Calu3 (cell line): ENCODE measurements at regions of chr2 and their contacts with region 1.

Region 1: DNA sequence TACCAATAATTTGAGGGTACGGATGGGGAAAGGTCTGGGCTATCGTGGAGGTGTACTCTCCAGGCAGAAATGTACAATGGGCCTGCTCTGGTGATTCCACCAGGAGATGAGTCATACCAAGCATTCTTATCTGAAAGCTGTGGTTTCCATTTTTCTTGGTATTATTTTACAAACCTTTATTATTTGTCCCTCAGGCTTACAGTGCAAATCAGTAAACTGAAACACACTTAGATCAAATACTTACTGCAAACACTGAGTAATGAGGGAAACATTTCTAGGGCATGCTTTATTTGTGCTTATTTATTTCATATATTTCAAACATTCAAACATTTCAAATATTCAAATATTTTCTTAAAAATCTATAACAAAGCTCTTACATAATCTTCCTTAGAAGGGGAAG is 319.8 kb downstream of the RND3 start:
- DNase-seq: peak; percentile 40
- H3K4me3 Mint-ChIP-seq: no peak overlapping the region
- H3K27ac Mint-ChIP-seq: peak overlapping the region; percentile 99
- H3K4me1 Mint-ChIP-seq: peaks cover 70% of the 10 kb centered on the region
- H3K27me3 Mint-ChIP-seq: no peaks in the 10 kb centered on the region
- CTCF ChIP-seq: no peak

Region 2: DNA sequence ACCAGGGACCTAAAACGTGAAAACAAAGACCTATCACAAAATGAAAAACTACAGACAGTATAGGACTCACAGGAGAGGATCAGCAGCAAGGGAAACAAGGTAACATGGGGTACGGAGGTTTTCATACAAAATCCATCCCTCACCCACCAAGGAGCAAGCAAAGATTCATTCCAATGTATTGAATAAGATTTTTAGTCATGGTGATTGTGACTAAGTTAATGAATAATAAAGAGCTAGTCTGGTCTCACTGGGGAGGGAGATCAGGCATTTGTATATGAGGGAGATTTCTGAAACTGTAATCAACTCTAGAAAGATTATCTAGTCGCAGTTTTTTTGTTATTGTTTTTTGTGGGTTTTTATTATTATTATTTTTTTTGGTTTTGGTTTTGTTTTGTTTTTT is 243.7 kb before region 1 on chr2:
- CTCF ChIA-PET with region 1: no interaction called
- intact Hi-C with region 1: loop called (anchors 10 kb)
- DNase-seq: no peak
- H3K4me3 Mint-ChIP-seq: peak overlapping the region; percentile 10
- H3K27ac Mint-ChIP-seq: peak overlapping the region; percentile 63
- H3K4me1 Mint-ChIP-seq: peaks cover 18% of the 10 kb centered on the region
- H3K27me3 Mint-ChIP-seq: no peaks in the 10 kb centered on the region
- CTCF ChIP-seq: no peak

Region 3: DNA sequence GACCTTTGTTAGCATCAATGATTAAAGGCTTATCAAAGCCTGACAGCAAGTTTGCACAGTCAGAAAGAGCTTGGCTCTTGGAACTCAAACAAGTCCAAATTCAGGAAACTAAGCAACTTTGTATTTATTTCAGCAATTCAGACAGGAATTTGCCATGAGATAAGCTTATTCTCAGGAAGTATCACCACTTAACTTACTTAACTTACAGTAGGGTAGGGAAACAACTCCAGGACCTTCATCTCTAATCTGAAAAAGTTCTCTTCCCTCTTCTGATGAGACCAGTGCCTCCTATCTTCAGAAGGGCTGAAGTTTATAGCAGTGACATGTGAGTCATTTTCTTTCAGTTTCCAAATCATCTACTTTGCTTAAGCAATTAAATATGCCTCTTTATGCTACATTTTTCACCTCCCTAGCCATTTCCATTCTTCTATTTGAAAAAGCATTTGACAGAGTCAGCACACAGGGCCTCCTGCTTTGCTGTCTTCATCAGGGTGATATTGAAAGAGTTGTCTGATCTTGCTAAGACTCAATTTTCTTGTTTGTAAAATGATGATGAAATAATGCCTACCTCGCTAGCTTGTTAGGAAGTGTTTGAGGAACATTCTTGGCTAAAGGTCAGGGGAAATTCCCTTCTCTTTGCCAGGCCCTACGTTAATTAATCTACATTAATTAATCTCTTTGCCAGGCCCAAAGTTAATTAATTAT is 69.7 kb before region 1 on chr2:
- CTCF ChIA-PET with region 1: no interaction called
- intact Hi-C with region 1: no loop called
- DNase-seq: no peak
- H3K4me3 Mint-ChIP-seq: no peak overlapping the region
- H3K27ac Mint-ChIP-seq: peak overlapping the region; percentile 70
- H3K4me1 Mint-ChIP-seq: peaks cover 9% of the 10 kb centered on the region
- H3K27me3 Mint-ChIP-seq: no peaks in the 10 kb centered on the region
- CTCF ChIP-seq: no peak

Region 4: GRCh38 chr2:150143087-150143536 is 24.6 kb before region 1 on chr2:
- CTCF ChIA-PET with region 1: interaction called, 5 read pairs
- intact Hi-C with region 1: loop called (anchors 2 kb)
- DNase-seq: peak; percentile 30
- H3K4me3 Mint-ChIP-seq: peak overlapping the region; percentile 50
- H3K27ac Mint-ChIP-seq: peak overlapping the region; percentile 90
- H3K4me1 Mint-ChIP-seq: peaks cover 66% of the 10 kb centered on the region
- H3K27me3 Mint-ChIP-seq: no peaks in the 10 kb centered on the region
- CTCF ChIP-seq: no peak